WTC11 (cell line): ENCODE measurements at regions of chr4 and their contacts with region 1.

Region 1: DNA sequence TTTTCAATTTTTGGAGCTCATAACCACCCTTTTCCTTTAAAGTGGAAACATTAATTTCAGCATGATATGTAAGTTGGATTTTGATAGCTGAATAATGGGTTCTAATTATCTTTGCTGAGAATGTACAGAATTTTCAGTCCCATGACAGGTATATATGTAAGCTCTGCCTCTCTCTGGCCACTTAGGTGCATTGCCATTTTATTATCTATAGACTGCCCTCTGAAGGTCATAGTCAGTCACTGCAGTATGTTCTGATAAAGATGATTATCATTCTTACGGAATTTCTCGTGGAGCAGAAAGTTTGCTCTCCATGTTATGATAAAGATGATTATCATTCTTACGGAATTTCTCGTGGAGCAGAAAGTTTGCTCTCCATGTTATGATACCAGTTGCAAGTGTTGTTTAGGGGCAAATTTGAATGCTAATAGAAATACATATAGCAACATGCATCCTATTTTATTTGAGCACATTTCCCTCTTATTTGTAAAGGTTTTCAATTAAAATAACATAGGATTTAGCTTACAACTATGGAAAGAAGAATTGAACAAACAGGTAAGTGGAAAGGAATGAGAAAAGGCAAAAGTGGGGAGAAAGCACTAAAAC is 10.4 kb downstream of the AFP start:
- DNase-seq: no peak
- ATAC-seq: peak; percentile 75
- H3K4me3 Mint-ChIP-seq: no peak overlapping the region
- H3K27ac Mint-ChIP-seq: no peak overlapping the region
- H3K4me1 Mint-ChIP-seq: peaks cover 28% of the 10 kb centered on the region
- H3K27me3 Mint-ChIP-seq: peaks cover 39% of the 10 kb centered on the region
- CTCF ChIP-seq: peak; percentile 55

Region 2: DNA sequence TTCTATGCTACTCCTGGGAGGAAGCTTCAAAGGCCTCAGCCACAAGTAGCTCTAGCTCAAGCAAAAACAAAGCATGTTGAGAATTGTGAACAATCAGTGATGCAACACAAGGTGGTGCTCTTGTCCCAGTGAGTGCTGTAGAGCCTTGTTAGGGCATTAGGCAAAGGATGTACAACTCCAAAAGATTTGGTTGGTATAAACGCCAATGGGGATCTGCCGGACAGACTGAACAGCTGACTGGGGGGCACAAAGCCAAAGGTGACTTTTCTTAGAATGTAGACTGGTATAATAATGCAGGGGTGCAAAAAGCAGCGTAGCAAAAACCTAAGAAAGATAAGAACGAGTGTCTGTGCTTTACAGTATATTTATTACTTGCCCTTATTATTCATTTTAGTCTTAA is 105.0 kb before region 1 on chr4:
- CTCF ChIA-PET with region 1: interaction called, 77 read pairs
- POLR2A ChIA-PET with region 1: no interaction called
- DNase-seq: peak; percentile 50
- ATAC-seq: peak; percentile 95
- H3K4me3 Mint-ChIP-seq: no peak overlapping the region
- H3K27ac Mint-ChIP-seq: no peak overlapping the region
- H3K4me1 Mint-ChIP-seq: peaks cover 29% of the 10 kb centered on the region
- H3K27me3 Mint-ChIP-seq: no peaks in the 10 kb centered on the region
- CTCF ChIP-seq: peak; percentile 34; the same call in 1 of the 2 replicates

Region 3: GRCh38 chr4:73508651-73509050 is 62.2 kb after region 1 on chr4:
- CTCF ChIA-PET with region 1: no interaction called
- POLR2A ChIA-PET with region 1: no interaction called
- DNase-seq: no peak
- ATAC-seq: no peak
- H3K4me3 Mint-ChIP-seq: no peak overlapping the region
- H3K27ac Mint-ChIP-seq: no peak overlapping the region
- H3K4me1 Mint-ChIP-seq: peaks cover 5% of the 10 kb centered on the region; the same call in 1 of the 2 replicates
- H3K27me3 Mint-ChIP-seq: no peaks in the 10 kb centered on the region
- CTCF ChIP-seq: no peak

Region 4: DNA sequence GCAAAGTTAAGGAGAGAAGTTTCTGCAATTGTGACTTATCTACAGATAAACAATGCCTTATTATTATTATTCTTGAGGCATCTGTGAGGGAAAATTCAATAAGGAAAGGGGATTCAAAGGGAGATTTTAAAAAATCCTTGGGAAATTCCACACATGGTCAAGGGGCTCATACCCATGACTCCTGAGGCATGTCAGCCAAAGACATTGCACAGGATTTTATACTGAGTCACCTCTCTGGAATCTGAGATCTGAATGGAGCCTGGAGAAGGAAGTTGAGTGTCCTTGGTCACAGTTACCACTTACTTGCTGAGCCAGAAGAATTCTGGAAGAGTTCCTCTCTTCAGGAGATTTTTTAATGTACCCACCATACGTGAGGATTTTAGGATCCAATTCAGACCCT is 279.5 kb after region 1 on chr4:
- CTCF ChIA-PET with region 1: no interaction called
- POLR2A ChIA-PET with region 1: no interaction called
- DNase-seq: no peak
- ATAC-seq: peak; percentile 49; the same call in 1 of the 2 replicates
- H3K4me3 Mint-ChIP-seq: no peak overlapping the region
- H3K27ac Mint-ChIP-seq: no peak overlapping the region
- H3K4me1 Mint-ChIP-seq: peaks cover 14% of the 10 kb centered on the region
- H3K27me3 Mint-ChIP-seq: no peaks in the 10 kb centered on the region
- CTCF ChIP-seq: no peak

Region 5: GRCh38 chr4:73836373-73837279 is 390.2 kb after region 1 on chr4 and contains the start of gene CXCL6:
- CTCF ChIA-PET with region 1: no interaction called
- POLR2A ChIA-PET with region 1: no interaction called
- DNase-seq: peak; percentile 67
- ATAC-seq: peak; percentile 86
- H3K4me3 Mint-ChIP-seq: peak within 1 kb of the TSS; percentile 89
- H3K27ac Mint-ChIP-seq: no peak within 1 kb of the TSS
- H3K4me1 Mint-ChIP-seq: peaks cover 9% of the 10 kb centered on the region
- H3K27me3 Mint-ChIP-seq: peaks cover 37% of the 10 kb centered on the region
- CTCF ChIP-seq: no peak
- total RNA-seq, gene CXCL6: 3.8 to 4.9 TPM (median 4.4 TPM) in 3 replicates